Cardiac septum (tissue), 1 donor: ENCODE measurements at regions of chr17 and their contacts with region 1.

Region 1: GRCh38 chr17:75749545-75750389 is 15.2 kb downstream of the GALK1 start:
- DNase-seq: peak; percentile 95

Region 2: GRCh38 chr17:75589012-75589918 is 160.5 kb before region 1 on chr17:
- intact Hi-C with region 1: no loop called
- DNase-seq: peak; percentile 99

Region 3: GRCh38 chr17:75679706-75680442 is 69.9 kb before region 1 on chr17:
- intact Hi-C with region 1: loop called (anchors 2 kb)
- DNase-seq: no peak